ENCODE measurements at regions of chr3 and their contacts with region 1.

Region 1: DNA sequence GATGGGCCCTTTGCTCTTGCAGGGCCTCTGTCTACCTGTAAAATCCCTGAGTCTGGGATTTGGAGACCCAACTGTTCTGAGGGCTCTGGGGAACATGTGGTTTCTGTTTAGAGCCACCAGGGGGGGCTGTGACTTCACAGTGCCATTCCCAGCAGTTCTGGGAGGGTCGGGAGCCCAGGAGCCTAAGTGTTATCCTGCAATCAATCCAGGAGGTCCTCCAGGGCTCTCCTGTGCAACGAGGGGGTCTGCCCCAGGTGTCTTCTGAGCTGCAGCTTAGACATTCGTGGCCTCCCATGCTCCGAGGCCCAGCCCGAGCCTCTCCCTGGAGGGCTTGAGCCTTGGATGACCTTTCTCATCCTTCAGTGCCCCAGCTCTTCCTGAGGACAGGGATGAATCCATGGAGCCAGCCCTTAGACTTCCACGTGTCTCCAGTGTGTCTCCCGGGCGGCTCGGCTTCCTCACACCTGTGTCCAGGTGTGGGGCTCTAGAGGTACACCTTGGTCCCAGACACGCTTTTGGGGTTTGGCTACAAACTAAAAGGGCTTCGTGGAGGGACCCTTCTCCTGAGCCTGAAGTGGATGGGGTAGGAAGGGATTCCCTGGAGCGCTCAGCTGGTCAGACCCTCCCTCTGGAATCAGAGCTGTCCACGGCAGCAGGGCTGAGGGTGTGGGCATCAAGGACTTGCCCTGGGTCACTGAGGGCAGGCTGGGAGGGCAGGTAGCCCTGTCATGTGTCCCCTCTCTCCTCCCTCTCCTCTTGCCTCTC is 20.3 kb upstream of the ABTB1 start:
- DNase-seq: no peak
- H3K4me3 Mint-ChIP-seq: no peak overlapping the region
- H3K27ac Mint-ChIP-seq: no peak overlapping the region
- H3K4me1 Mint-ChIP-seq: no peaks in the 10 kb centered on the region
- H3K27me3 Mint-ChIP-seq: peaks cover 8% of the 10 kb centered on the region

Region 2: GRCh38 chr3:127525373-127525772 is 127.0 kb before region 1 on chr3:
- intact Hi-C with region 1: no loop called
- DNase-seq: no peak
- H3K4me3 Mint-ChIP-seq: no peak overlapping the region
- H3K27ac Mint-ChIP-seq: no peak overlapping the region
- H3K4me1 Mint-ChIP-seq: no peaks in the 10 kb centered on the region
- H3K27me3 Mint-ChIP-seq: peaks cover 13% of the 10 kb centered on the region

Region 3: GRCh38 chr3:127697551-127698240 is 45.3 kb after region 1 on chr3:
- intact Hi-C with region 1: loop called (anchors 1 kb)
- DNase-seq: peak; percentile 38
- H3K4me3 Mint-ChIP-seq: no peak overlapping the region
- H3K27ac Mint-ChIP-seq: no peak overlapping the region
- H3K4me1 Mint-ChIP-seq: no peaks in the 10 kb centered on the region
- H3K27me3 Mint-ChIP-seq: peaks cover 4% of the 10 kb centered on the region

Region 4: DNA sequence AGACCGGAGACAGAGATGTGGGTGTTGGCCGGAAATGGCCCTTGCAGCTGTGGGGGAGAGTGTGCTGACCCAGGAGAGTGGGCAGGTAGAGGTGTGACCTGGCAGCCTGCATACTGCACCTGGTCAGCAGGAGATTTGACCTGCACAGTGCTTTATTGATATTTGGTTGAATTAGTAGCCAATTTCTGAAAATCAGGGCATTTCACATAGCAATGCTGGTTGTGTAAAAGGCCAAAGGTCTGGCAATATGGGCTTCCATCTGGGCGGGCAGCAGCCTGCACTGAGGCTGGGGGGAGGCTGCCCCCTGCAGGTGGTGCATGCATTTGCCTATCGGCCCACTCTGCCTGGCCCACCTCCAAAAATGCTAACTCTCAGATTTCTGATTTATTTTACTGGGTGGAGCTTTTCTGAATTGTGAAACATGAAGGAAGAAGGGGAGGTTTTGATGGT is 179.3 kb after region 1 on chr3:
- intact Hi-C with region 1: loop called (anchors 1 kb)
- DNase-seq: no peak
- H3K4me3 Mint-ChIP-seq: no peak overlapping the region
- H3K27ac Mint-ChIP-seq: no peak overlapping the region
- H3K4me1 Mint-ChIP-seq: no peaks in the 10 kb centered on the region
- H3K27me3 Mint-ChIP-seq: peaks cover 5% of the 10 kb centered on the region

Region 5: GRCh38 chr3:127970966-127971592 is 318.7 kb after region 1 on chr3:
- intact Hi-C with region 1: loop called (anchors 1 kb)
- DNase-seq: no peak
- H3K4me3 Mint-ChIP-seq: no peak overlapping the region
- H3K27ac Mint-ChIP-seq: no peak overlapping the region
- H3K4me1 Mint-ChIP-seq: no peaks in the 10 kb centered on the region
- H3K27me3 Mint-ChIP-seq: peaks cover 38% of the 10 kb centered on the region

Region 6: GRCh38 chr3:128133273-128134084 is 481.1 kb after region 1 on chr3:
- intact Hi-C with region 1: loop called (anchors 10 kb)
- DNase-seq: peak; percentile 28
- H3K4me3 Mint-ChIP-seq: no peak overlapping the region
- H3K27ac Mint-ChIP-seq: no peak overlapping the region
- H3K4me1 Mint-ChIP-seq: no peaks in the 10 kb centered on the region
- H3K27me3 Mint-ChIP-seq: peaks cover 32% of the 10 kb centered on the region